Panc1 (cell line): ENCODE measurements at regions of chr3 and their contacts with region 1.

Region 1: GRCh38 chr3:36957862-36958686 is 13.2 kb upstream of the TRANK1 start:
- DNase-seq: no peak
- ATAC-seq: no peak; the same call in 1 of the 2 replicates
- H3K4me3 ChIP-seq: no peak overlapping the region
- H3K27ac ChIP-seq: no peak overlapping the region
- H3K4me1 ChIP-seq: no peaks in the 10 kb centered on the region
- H3K27me3 ChIP-seq: no peaks in the 10 kb centered on the region
- CTCF ChIP-seq: no peak

Region 2: GRCh38 chr3:36095238-36095637 is 862.8 kb before region 1 on chr3:
- CTCF ChIA-PET with region 1: no interaction called
- POLR2A ChIA-PET with region 1: no interaction called
- in situ Hi-C with region 1: no loop called
- intact Hi-C with region 1: no loop called
- DNase-seq: no peak
- ATAC-seq: no peak
- H3K4me3 ChIP-seq: no peak overlapping the region
- H3K27ac ChIP-seq: no peak overlapping the region
- H3K4me1 ChIP-seq: no peaks in the 10 kb centered on the region
- H3K27me3 ChIP-seq: no peaks in the 10 kb centered on the region
- CTCF ChIP-seq: no peak

Region 3: DNA sequence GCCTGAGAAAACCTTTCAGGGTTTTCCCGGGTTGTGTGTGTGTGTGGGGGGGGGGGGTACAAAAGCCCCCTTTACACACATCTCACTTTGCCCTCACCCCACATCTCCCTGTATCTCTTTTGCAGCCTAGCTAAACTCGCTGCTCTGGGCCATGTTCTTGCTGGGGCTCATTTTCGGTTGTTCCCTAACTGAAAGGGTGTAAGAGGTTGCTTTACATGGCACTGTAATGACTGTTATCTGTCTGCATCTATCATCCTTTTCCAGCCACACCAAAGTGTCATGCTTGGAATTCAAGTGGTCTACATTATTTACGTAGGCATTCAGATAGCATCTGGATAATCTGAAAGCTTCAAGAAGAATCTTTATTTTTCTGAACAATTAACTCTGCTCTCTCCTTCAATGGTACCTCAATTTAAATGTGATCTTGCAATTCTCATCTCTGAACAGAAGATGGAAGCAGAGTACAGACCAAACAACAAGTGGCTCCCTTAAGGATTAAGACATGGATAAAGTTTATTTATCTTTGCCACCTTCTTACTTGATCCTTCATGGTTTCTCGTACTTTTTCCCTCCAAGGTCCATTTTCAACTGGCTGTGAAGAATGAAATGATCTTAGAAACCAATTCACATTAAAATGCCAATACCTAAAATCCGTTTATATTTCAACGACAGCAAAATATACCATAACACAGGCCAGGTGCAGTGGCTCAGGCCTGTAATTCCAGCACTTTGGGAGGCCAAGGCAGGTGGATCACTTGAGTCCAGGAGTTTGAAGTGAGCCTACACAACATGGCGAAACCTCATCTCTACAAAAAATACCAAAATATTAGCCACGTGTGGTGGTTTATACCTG is 228.6 kb before region 1 on chr3:
- CTCF ChIA-PET with region 1: no interaction called
- POLR2A ChIA-PET with region 1: no interaction called
- in situ Hi-C with region 1: no loop called
- intact Hi-C with region 1: loop called (anchors 5 kb)
- DNase-seq: peak; percentile 27
- ATAC-seq: peak; percentile 76; the same call in 1 of the 2 replicates
- H3K4me3 ChIP-seq: no peak overlapping the region
- H3K27ac ChIP-seq: no peak overlapping the region
- H3K4me1 ChIP-seq: no peaks in the 10 kb centered on the region
- H3K27me3 ChIP-seq: no peaks in the 10 kb centered on the region
- CTCF ChIP-seq: peak; percentile 69

Region 4: DNA sequence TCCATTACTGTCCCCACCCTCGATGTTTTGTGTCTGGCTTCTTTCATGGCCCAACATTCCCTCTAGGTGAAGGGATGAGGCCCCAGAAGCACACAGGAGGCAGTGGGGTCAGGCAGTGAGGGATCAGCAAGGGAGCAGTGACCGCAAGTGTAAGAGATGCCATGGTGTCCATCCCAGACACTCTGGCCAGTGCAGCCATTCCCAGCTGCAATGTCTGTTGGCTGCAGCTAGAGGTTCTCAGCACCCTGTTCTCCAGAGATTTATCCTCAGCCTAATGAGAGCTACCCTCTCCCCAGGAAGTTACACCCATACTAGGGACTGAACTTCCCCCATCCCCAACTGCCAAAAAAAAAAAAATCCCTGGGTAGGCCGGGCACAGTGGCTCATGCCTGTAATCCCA is 53.4 kb before region 1 on chr3:
- CTCF ChIA-PET with region 1: interaction called, 8 read pairs
- POLR2A ChIA-PET with region 1: no interaction called
- in situ Hi-C with region 1: no loop called
- intact Hi-C with region 1: loop called (anchors 5 kb)
- DNase-seq: no peak
- ATAC-seq: peak; percentile 67
- H3K4me3 ChIP-seq: no peak overlapping the region
- H3K27ac ChIP-seq: no peak overlapping the region
- H3K4me1 ChIP-seq: no peaks in the 10 kb centered on the region
- H3K27me3 ChIP-seq: no peaks in the 10 kb centered on the region
- CTCF ChIP-seq: peak; percentile 70

Region 5: GRCh38 chr3:37014620-37015019 is 56.5 kb after region 1 on chr3:
- CTCF ChIA-PET with region 1: no interaction called
- POLR2A ChIA-PET with region 1: no interaction called
- in situ Hi-C with region 1: no loop called
- intact Hi-C with region 1: no loop called
- DNase-seq: no peak
- ATAC-seq: no peak
- H3K4me3 ChIP-seq: no peak overlapping the region
- H3K27ac ChIP-seq: no peak overlapping the region
- H3K4me1 ChIP-seq: no peaks in the 10 kb centered on the region
- H3K27me3 ChIP-seq: no peaks in the 10 kb centered on the region
- CTCF ChIP-seq: no peak